B cell (primary cell): ENCODE measurements at regions of chr1 and their contacts with region 1.

Region 1: DNA sequence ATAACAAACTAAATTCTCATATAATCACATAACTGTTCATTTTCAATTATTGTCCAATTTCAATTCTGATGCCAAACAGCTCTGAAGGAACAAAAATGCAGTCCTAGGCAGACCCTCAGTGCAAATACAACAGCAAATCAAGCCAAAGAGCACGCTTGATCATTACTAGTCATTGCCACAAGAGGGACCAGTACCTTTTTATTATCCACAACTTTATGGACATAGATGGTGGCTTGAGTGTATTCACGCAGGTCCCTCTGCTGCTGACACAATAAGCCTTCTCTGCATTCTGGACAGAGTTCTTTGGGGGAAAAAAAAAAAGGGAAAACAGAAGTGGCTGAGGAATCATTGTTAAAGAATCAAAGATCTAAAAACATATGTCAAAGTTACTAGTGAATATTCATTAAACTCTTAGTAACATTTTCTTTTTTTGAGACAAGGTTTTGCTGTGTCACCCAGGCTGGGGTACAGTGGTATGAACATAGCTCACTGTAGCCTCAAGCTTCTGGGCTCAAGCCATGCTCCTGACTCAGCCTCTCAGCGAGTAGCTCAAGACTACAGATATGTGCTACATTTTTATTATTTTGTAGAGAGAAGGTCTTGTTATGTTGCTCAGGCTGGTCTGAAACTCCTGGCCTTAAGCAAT is 34.3 kb upstream of the RAP1GAP start:
- DNase-seq: peak; percentile 32
- ATAC-seq: no peak
- H3K4me3 ChIP-seq: no peak overlapping the region
- H3K4me3 Mint-ChIP-seq: no peak overlapping the region
- H3K27ac ChIP-seq: no peak overlapping the region
- H3K27ac Mint-ChIP-seq: no peak overlapping the region
- H3K4me1 ChIP-seq: peaks cover 0 to 4% of the 10 kb centered on the region in 2 donors
- H3K4me1 Mint-ChIP-seq: peaks cover 11% of the 10 kb centered on the region
- H3K27me3 ChIP-seq: no peaks in the 10 kb centered on the region
- H3K27me3 Mint-ChIP-seq: no peaks in the 10 kb centered on the region
- CTCF ChIP-seq: peak; percentile 62

Region 2: GRCh38 chr1:21573971-21574465 is 129.4 kb before region 1 on chr1:
- CTCF ChIA-PET with region 1: no interaction called
- POLR2A ChIA-PET with region 1: no interaction called
- intact Hi-C with region 1: no loop called
- DNase-seq: peak; percentile 46
- ATAC-seq: no peak
- H3K4me3 ChIP-seq: no peak overlapping the region
- H3K4me3 Mint-ChIP-seq: no peak overlapping the region
- H3K27ac ChIP-seq: no peak overlapping the region
- H3K27ac Mint-ChIP-seq: no peak overlapping the region
- H3K4me1 ChIP-seq: no peaks in the 10 kb centered on the region
- H3K4me1 Mint-ChIP-seq: peaks cover 1% of the 10 kb centered on the region
- H3K27me3 ChIP-seq: peaks cover 0 to 20% (median 6%) of the 10 kb centered on the region in 4 experiments
- H3K27me3 Mint-ChIP-seq: peaks cover 9% of the 10 kb centered on the region
- CTCF ChIP-seq: peak; percentile 14

Region 3: DNA sequence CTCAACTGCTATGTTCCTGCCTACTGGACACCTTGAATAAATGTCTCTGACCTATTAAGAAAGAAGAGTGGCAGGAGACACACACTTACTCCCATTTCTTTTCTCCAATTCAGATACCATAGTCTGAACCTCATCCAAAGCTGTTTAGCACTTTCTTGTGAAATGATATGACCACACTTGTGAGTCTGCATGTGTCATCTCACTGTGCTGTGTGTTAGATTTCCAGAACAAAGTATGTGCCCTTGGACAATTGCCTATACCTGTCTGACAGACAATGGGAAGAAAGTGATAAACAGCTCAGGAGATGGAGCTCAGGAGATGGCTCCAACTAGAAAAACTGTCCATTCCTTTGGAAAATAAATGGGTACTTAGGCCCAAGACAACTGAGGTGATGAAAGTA is 31.1 kb after region 1 on chr1:
- CTCF ChIA-PET with region 1: no interaction called
- POLR2A ChIA-PET with region 1: no interaction called
- intact Hi-C with region 1: no loop called
- DNase-seq: no peak
- ATAC-seq: no peak
- H3K4me3 ChIP-seq: no peak overlapping the region
- H3K4me3 Mint-ChIP-seq: no peak overlapping the region
- H3K27ac ChIP-seq: no peak overlapping the region
- H3K27ac Mint-ChIP-seq: no peak overlapping the region
- H3K4me1 ChIP-seq: no peaks in the 10 kb centered on the region
- H3K4me1 Mint-ChIP-seq: no peaks in the 10 kb centered on the region
- H3K27me3 ChIP-seq: no peaks in the 10 kb centered on the region
- H3K27me3 Mint-ChIP-seq: no peaks in the 10 kb centered on the region
- CTCF ChIP-seq: no peak

Region 4: GRCh38 chr1:21749109-21749508 is 45.7 kb after region 1 on chr1:
- CTCF ChIA-PET with region 1: no interaction called
- POLR2A ChIA-PET with region 1: no interaction called
- intact Hi-C with region 1: no loop called
- DNase-seq: no peak
- ATAC-seq: no peak
- H3K4me3 ChIP-seq: no peak overlapping the region
- H3K4me3 Mint-ChIP-seq: no peak overlapping the region
- H3K27ac ChIP-seq: no peak overlapping the region
- H3K27ac Mint-ChIP-seq: no peak overlapping the region
- H3K4me1 ChIP-seq: no peaks in the 10 kb centered on the region
- H3K4me1 Mint-ChIP-seq: no peaks in the 10 kb centered on the region
- H3K27me3 ChIP-seq: no peaks in the 10 kb centered on the region
- H3K27me3 Mint-ChIP-seq: no peaks in the 10 kb centered on the region
- CTCF ChIP-seq: no peak

Region 5: DNA sequence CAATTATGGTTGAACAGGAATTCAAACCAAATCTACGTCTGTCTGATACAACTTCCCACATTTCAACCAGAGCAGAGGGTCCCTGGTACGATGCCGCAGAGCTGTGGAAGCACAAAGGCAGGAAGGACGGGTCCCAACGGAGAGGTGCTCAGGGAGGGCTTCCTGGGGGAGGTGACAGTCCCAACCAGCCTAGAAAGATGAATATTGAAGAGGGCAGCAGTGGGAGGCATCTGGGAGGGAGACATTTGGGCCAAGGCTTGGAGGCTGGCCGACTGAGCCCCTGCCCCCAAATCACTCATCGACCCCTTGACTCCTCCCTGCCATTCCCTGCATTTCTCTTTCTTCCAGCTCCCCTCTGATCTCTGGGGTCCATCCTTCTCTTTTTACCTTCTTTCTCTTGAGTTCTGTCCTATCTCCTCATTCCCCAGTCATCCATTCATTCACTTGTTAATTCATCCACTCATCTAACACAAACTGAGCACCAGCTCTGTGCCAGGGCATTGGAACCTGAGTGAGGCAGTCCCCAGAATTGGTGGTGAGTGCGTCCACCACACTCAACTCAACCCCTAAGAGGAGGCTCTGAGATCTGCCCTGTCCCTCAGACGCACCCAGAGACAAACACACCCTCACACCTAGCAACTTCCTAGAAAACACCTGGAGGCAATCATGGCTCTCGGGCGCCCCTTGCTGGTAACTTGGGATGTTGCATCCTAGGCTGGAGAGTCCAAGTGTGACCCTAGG is 260.2 kb after region 1 on chr1:
- CTCF ChIA-PET with region 1: interaction called, 3 read pairs
- POLR2A ChIA-PET with region 1: no interaction called
- intact Hi-C with region 1: loop called (anchors 1 kb)
- DNase-seq: peak; percentile 83
- ATAC-seq: peak; percentile 96
- H3K4me3 ChIP-seq: no peak overlapping the region
- H3K4me3 Mint-ChIP-seq: no peak overlapping the region
- H3K27ac ChIP-seq: no peak overlapping the region
- H3K27ac Mint-ChIP-seq: no peak overlapping the region
- H3K4me1 ChIP-seq: peaks cover 0 to 4% of the 10 kb centered on the region in 2 donors
- H3K4me1 Mint-ChIP-seq: no peaks in the 10 kb centered on the region
- H3K27me3 ChIP-seq: no peaks in the 10 kb centered on the region
- H3K27me3 Mint-ChIP-seq: peaks cover 14% of the 10 kb centered on the region
- CTCF ChIP-seq: peak; percentile 94